GM12878 (cell line): ENCODE measurements at regions of chr15 and their contacts with region 1.

Region 1: DNA sequence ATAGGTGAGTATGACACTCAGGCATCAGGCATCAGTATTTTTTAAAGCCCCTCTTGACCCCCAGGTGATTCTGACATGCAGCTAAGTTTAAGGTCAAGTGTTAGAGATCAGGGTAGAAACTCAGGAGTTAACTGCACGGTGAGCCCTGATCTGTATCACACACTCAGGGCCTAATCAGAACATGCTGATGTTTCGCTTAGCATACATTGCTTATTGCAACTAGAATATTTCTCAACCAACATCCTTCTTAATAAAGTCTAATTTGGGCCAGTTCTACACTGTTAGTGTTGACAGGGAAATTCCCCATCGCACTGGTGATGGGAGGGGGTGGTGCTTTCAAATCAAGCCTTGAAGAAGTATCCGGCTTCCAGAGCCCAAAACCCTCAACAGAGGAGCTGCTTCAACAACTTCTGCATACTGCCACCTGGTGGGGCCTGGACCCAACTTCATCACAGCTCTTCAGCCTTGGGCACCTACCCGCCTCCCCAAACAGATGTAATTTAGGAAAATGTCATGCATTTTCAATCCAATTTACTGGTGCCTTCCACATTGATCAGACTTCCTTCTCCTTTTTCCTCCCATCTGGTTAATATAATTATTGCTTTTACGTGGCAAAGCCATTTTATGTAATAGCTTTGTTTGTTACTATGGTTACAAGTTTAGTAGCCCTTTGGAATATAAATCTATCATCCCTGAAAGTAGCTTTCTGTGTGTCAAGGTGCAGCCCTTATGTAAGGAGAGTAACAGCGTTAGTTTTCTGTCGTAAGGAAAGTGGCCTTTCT is 312.2 kb downstream of the RORA start:
- DNase-seq: peak; percentile 76
- ATAC-seq: peak; percentile 96
- H3K4me3 ChIP-seq: no peak overlapping the region
- H3K27ac ChIP-seq: no peak overlapping the region
- H3K4me1 ChIP-seq: peaks cover 3% of the 10 kb centered on the region; the same call in 1 of the 2 replicates
- H3K27me3 ChIP-seq: no peaks in the 10 kb centered on the region
- CTCF ChIP-seq: peak; percentile 82 to 87 (median 84)
- EP300 ChIP-seq: no peak
- POLR2A ChIP-seq: no peak
- RAD21 ChIP-seq: peak; percentile 92

Region 2: GRCh38 chr15:60362321-60363086 is 554.4 kb before region 1 on chr15:
- CTCF ChIA-PET with region 1: interaction called, 33 read pairs
- POLR2A ChIA-PET with region 1: no interaction called
- RAD21 ChIA-PET with region 1: interaction called, 13 read pairs
- SMC1A ChIA-PET with region 1: interaction called, 14 read pairs
- in situ Hi-C with region 1: loop called (anchors 10 kb)
- intact Hi-C with region 1: loop called (anchors 5 kb)
- DNase-seq: no peak
- ATAC-seq: no peak
- H3K4me3 ChIP-seq: no peak overlapping the region
- H3K27ac ChIP-seq: no peak overlapping the region
- H3K4me1 ChIP-seq: no peaks in the 10 kb centered on the region
- H3K27me3 ChIP-seq: no peaks in the 10 kb centered on the region
- CTCF ChIP-seq: no peak
- EP300 ChIP-seq: no peak
- POLR2A ChIP-seq: no peak
- RAD21 ChIP-seq: no peak

Region 3: GRCh38 chr15:60520825-60521368 is 396.0 kb before region 1 on chr15:
- CTCF ChIA-PET with region 1: interaction called, 13 read pairs
- POLR2A ChIA-PET with region 1: no interaction called
- RAD21 ChIA-PET with region 1: interaction called, 12 read pairs
- SMC1A ChIA-PET with region 1: interaction called, 22 read pairs
- in situ Hi-C with region 1: no loop called
- intact Hi-C with region 1: no loop called
- DNase-seq: no peak
- ATAC-seq: peak; percentile 92
- H3K4me3 ChIP-seq: no peak overlapping the region
- H3K27ac ChIP-seq: peak overlapping the region; percentile 67
- H3K4me1 ChIP-seq: peaks cover 16% of the 10 kb centered on the region
- H3K27me3 ChIP-seq: no peaks in the 10 kb centered on the region
- CTCF ChIP-seq: peak; percentile 74 to 86 (median 86)
- EP300 ChIP-seq: no peak
- POLR2A ChIP-seq: no peak
- RAD21 ChIP-seq: peak; percentile 83

Region 4: GRCh38 chr15:60649845-60650548 is 266.9 kb before region 1 on chr15:
- CTCF ChIA-PET with region 1: interaction called, 10 read pairs
- POLR2A ChIA-PET with region 1: no interaction called
- RAD21 ChIA-PET with region 1: interaction called, 9 read pairs
- SMC1A ChIA-PET with region 1: interaction called, 11 read pairs
- in situ Hi-C with region 1: no loop called
- intact Hi-C with region 1: no loop called
- DNase-seq: peak; percentile 57
- ATAC-seq: peak; percentile 69
- H3K4me3 ChIP-seq: peak overlapping the region; percentile 55; the same call in 1 of the 2 replicates
- H3K27ac ChIP-seq: peak overlapping the region; percentile 84
- H3K4me1 ChIP-seq: peaks cover 42% of the 10 kb centered on the region
- H3K27me3 ChIP-seq: no peaks in the 10 kb centered on the region
- CTCF ChIP-seq: peak in 2 of 3 experiments; percentile 33 to 34; a peak in 4 of 6 replicates
- EP300 ChIP-seq: peak; percentile 77 to 89; a peak in 3 of 4 replicates
- POLR2A ChIP-seq: no peak
- RAD21 ChIP-seq: peak; percentile 77

Region 5: GRCh38 chr15:60720493-60721256 is 196.2 kb before region 1 on chr15:
- CTCF ChIA-PET with region 1: interaction called, 4 read pairs
- POLR2A ChIA-PET with region 1: no interaction called
- RAD21 ChIA-PET with region 1: interaction called, 4 read pairs
- SMC1A ChIA-PET with region 1: interaction called, 19 read pairs
- in situ Hi-C with region 1: no loop called
- intact Hi-C with region 1: no loop called
- DNase-seq: peak; percentile 67
- ATAC-seq: peak; percentile 88
- H3K4me3 ChIP-seq: peak overlapping the region; percentile 48; the same call in 1 of the 2 replicates
- H3K27ac ChIP-seq: peak overlapping the region; percentile 68
- H3K4me1 ChIP-seq: peaks cover 35% of the 10 kb centered on the region
- H3K27me3 ChIP-seq: no peaks in the 10 kb centered on the region
- CTCF ChIP-seq: no peak
- EP300 ChIP-seq: peak; percentile 28 to 54; a peak in 3 of 4 replicates
- POLR2A ChIP-seq: no peak
- RAD21 ChIP-seq: no peak; the same call in 1 of the 2 replicates

Region 6: GRCh38 chr15:60821462-60822061 is 95.3 kb before region 1 on chr15:
- CTCF ChIA-PET with region 1: no interaction called
- POLR2A ChIA-PET with region 1: no interaction called
- RAD21 ChIA-PET with region 1: no interaction called
- SMC1A ChIA-PET with region 1: no interaction called
- in situ Hi-C with region 1: no loop called
- intact Hi-C with region 1: no loop called
- DNase-seq: no peak
- ATAC-seq: no peak
- H3K4me3 ChIP-seq: no peak overlapping the region
- H3K27ac ChIP-seq: no peak overlapping the region
- H3K4me1 ChIP-seq: no peaks in the 10 kb centered on the region
- H3K27me3 ChIP-seq: no peaks in the 10 kb centered on the region
- CTCF ChIP-seq: no peak
- EP300 ChIP-seq: no peak
- POLR2A ChIP-seq: no peak
- RAD21 ChIP-seq: no peak

Region 7: DNA sequence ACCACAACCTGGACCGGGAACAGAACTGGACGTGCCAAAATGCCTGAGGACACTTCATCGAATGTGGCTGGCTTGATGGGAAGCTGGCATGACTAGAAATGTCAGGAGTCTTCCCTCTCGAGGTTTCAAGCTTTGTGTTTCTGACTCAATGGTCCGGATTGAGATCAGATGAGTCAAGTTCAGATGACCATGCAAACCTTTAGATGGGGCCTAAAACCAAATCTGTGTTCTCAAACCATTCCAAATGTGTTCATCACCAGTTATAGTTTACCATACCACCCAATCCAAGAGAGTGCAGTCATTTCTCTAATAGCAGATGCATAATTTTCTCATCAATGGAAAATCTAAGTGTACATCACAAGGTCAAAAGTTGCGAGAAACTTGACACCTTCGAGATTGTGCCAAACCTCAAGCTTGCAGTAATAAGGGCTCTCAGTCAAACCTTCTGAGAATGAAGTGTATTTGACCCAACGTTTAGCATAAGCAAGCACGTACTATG is 56.8 kb before region 1 on chr15:
- CTCF ChIA-PET with region 1: interaction called, 24 read pairs
- POLR2A ChIA-PET with region 1: no interaction called
- RAD21 ChIA-PET with region 1: interaction called, 22 read pairs
- SMC1A ChIA-PET with region 1: interaction called, 23 read pairs
- in situ Hi-C with region 1: no loop called
- intact Hi-C with region 1: loop called (anchors 1 kb)
- DNase-seq: no peak
- ATAC-seq: no peak
- H3K4me3 ChIP-seq: no peak overlapping the region
- H3K27ac ChIP-seq: no peak overlapping the region
- H3K4me1 ChIP-seq: no peaks in the 10 kb centered on the region
- H3K27me3 ChIP-seq: no peaks in the 10 kb centered on the region
- CTCF ChIP-seq: no peak
- EP300 ChIP-seq: no peak
- POLR2A ChIP-seq: no peak
- RAD21 ChIP-seq: no peak

Region 8: DNA sequence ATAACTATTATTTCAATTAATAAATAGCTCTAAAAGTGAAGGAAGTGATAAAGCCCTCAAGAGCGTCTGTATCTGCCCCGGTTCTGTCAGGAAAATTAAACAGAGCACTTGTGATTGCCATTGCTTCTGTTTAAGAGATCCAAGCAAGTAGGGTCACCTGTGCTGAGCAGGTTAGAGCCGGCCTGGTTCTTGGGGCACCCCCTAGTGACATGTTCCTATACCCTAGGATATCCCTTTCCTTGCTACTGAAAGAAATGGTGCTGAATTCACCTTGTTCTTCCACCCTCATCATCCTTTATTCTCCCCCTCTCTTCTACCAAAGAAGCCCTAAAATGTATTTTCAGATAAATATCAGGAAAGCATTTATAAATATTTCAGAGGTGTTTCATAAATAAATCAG is 11.3 kb before region 1 on chr15:
- CTCF ChIA-PET with region 1: interaction called, 45 read pairs
- POLR2A ChIA-PET with region 1: interaction called, 6 read pairs
- RAD21 ChIA-PET with region 1: interaction called, 19 read pairs
- SMC1A ChIA-PET with region 1: interaction called, 52 read pairs
- in situ Hi-C with region 1: no loop called
- intact Hi-C with region 1: loop called (anchors 2 kb)
- DNase-seq: no peak
- ATAC-seq: peak; percentile 32
- H3K4me3 ChIP-seq: no peak overlapping the region
- H3K27ac ChIP-seq: no peak overlapping the region
- H3K4me1 ChIP-seq: peaks cover 26% of the 10 kb centered on the region
- H3K27me3 ChIP-seq: no peaks in the 10 kb centered on the region
- CTCF ChIP-seq: peak in 2 of 3 experiments; percentile 22 to 45; a peak in 3 of 6 replicates
- EP300 ChIP-seq: no peak
- POLR2A ChIP-seq: no peak
- RAD21 ChIP-seq: peak; percentile 52

Region 9: GRCh38 chr15:61130945-61131942 is 214.4 kb after region 1 on chr15:
- CTCF ChIA-PET with region 1: no interaction called
- POLR2A ChIA-PET with region 1: no interaction called
- RAD21 ChIA-PET with region 1: no interaction called
- SMC1A ChIA-PET with region 1: no interaction called
- in situ Hi-C with region 1: no loop called
- intact Hi-C with region 1: no loop called
- DNase-seq: no peak
- ATAC-seq: no peak
- H3K4me3 ChIP-seq: no peak overlapping the region
- H3K27ac ChIP-seq: no peak overlapping the region
- H3K4me1 ChIP-seq: no peaks in the 10 kb centered on the region
- H3K27me3 ChIP-seq: no peaks in the 10 kb centered on the region; a peak in 1 of 4 replicates
- CTCF ChIP-seq: no peak
- EP300 ChIP-seq: no peak
- POLR2A ChIP-seq: no peak
- RAD21 ChIP-seq: no peak